GM13977 (cell line): ENCODE measurements at regions of chr17 and their contacts with region 1.

Region 1: GRCh38 chr17:49434821-49435670 is 20.4 kb upstream of the PHB1 start:
- DNase-seq: peak; percentile 83
- CTCF ChIP-seq: peak; percentile 76

Region 2: GRCh38 chr17:49556223-49556971 is 121.4 kb after region 1 on chr17:
- in situ Hi-C with region 1: loop called (anchors 10 kb)
- DNase-seq: peak; percentile 90
- CTCF ChIP-seq: peak; percentile 100